ENCODE measurements at regions of chr3 and their contacts with region 1.

Region 1: DNA sequence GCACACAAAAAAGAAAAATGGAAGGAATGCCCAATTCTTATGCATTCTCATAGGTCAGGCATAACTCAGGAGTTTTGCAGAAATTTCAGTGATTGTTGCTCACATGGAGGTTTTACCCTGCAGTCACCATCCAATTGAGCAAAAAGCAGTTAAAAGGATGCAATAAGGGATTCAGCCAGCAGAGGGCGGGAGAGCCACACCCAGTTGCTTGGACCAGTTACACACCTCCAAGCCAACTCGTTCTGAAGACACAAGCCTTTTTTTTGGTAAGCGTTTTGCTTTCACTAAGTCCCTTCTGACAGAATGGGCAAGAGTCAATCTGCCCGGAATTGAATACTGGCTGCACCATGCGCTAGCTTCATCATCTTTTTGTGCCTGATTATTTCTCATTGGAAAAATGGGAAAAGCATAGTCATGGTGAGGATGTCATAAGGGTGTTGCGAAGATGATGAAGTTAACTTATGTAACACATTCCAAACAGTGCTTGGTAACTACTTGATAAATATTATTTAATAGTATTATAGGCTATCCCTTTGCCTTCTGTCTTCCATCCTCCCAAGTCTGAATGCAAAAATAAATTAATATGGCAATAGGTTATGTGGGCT is 154.4 kb upstream of the SGO1 start:
- DNase-seq: peak; percentile 19 to 81
- ATAC-seq: peak; percentile 73 to 93 (median 78)
- H3K4me3 ChIP-seq: peak overlapping the region in 1 of 10 donors; percentile 5
- H3K27ac ChIP-seq: no peak overlapping the region
- H3K4me1 ChIP-seq: peaks cover 0 to 4% (median 0%) of the 10 kb centered on the region in 9 donors
- H3K27me3 ChIP-seq: no peaks in the 10 kb centered on the region
- CTCF ChIP-seq: peak; percentile 87 to 97 (median 94)

Region 2: DNA sequence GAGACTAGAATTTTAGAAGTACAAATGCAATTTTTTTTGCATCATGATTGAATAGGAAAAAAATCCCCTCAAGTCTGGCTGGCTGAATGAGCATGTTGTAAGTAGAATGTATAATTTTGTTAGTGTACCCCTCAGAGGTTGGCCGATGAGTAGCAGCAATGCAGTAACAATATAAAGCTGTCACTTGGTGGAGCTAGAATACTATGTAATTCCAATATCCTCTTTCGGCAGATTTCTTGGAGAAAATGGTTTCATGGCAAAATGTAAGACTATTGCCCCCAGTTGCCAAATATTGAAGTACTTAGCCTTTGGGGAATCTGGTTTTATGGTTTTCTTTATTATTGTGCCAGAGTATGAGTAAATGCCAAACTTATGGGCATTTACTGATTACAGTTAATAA is 114.7 kb before region 1 on chr3:
- intact Hi-C with region 1: loop called in 1 of 10 experiments (anchors 5 kb)
- DNase-seq: no peak
- ATAC-seq: peak in 3 of 8 donors; percentile 42 to 55 (median 44)
- H3K4me3 ChIP-seq: no peak overlapping the region
- H3K27ac ChIP-seq: no peak overlapping the region
- H3K4me1 ChIP-seq: peaks cover 0 to 6% (median 0%) of the 10 kb centered on the region in 9 donors
- H3K27me3 ChIP-seq: no peaks in the 10 kb centered on the region
- CTCF ChIP-seq: peak; percentile 11 to 74 (median 64)

Region 3: GRCh38 chr3:20739814-20740213 is 399.4 kb after region 1 on chr3:
- intact Hi-C with region 1: loop called in 3 of 10 experiments (anchors 2 to 5 kb)
- DNase-seq: no peak
- ATAC-seq: peak in 1 of 8 donors; percentile 69
- H3K4me3 ChIP-seq: no peak overlapping the region
- H3K27ac ChIP-seq: no peak overlapping the region
- H3K4me1 ChIP-seq: peaks cover 0 to 4% (median 0%) of the 10 kb centered on the region in 9 donors
- H3K27me3 ChIP-seq: no peaks in the 10 kb centered on the region
- CTCF ChIP-seq: peak in 6 of 9 donors; percentile 14 to 52 (median 32)

Region 4: DNA sequence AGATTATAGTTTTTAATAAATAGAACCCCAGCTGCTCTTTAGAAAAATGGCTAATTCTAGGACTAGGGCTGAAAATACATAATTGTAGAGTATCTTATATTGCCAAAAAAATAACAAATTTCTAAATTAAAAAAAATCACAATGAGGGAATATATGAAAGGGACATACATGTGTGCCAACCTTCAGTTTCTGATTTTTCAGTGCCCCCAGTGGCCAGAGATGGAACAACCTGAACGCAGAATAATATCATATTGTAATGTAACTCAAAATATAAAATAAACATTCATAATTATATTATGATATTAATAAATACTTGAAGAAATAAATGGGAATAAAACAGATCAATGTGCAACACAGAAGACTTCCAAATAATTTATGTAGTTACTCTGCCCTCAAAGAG is 950.1 kb after region 1 on chr3:
- intact Hi-C with region 1: loop called in 1 of 10 experiments (anchors 10 kb)
- DNase-seq: no peak
- ATAC-seq: no peak
- H3K4me3 ChIP-seq: no peak overlapping the region
- H3K27ac ChIP-seq: no peak overlapping the region
- H3K4me1 ChIP-seq: no peaks in the 10 kb centered on the region
- H3K27me3 ChIP-seq: no peaks in the 10 kb centered on the region
- CTCF ChIP-seq: peak; percentile 22 to 69 (median 51)

Region 5: DNA sequence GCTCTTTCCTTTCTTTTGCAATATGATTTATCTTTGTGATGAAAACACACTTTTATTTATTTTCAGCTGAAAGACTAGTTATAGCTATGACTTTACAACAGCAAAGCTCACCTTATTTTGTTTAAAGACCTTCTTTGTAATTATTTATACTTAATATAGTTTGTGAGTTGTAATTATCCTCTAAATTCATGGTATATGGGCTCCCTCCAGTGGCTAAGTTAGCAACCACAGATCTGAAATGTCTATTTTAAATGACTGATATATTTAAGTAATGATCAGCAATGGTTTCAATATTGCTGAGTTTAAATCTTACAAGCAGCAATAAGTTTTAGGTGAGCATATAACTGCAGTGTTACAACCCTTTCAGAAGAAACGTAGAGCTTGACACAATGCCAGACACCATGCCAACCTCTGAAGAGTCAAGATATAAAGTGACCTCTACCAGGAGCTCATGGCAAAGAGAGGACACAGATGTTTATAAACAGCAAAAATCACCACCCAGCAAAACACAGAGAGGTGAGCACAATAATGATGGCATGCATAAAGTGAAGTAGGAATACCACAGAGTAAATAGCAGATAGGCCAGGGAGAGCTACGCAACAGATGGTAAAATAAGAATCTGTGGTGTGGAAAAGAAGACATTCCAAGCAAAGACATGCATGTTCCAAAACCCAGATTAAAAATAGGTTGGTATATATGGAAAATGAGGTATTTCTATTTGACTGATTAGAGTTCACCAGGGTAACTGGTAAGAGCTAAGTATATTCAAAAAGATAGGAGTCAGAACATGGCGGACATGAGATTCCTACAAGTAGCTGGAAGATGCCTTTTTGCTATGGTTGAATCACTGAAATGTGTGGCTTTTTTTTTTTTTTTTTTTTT is 1554.3 kb after region 1 on chr3:
- intact Hi-C with region 1: loop called in 3 of 10 experiments (anchors 5 to 10 kb)
- DNase-seq: peak in 1 of 2 donors; percentile 19
- ATAC-seq: peak in 7 of 8 donors; percentile 50 to 82 (median 71)
- H3K4me3 ChIP-seq: no peak overlapping the region
- H3K27ac ChIP-seq: peak overlapping the region in 4 of 10 donors; percentile 5 to 44 (median 33)
- H3K4me1 ChIP-seq: peaks cover 0 to 51% (median 0%) of the 10 kb centered on the region in 9 donors
- H3K27me3 ChIP-seq: no peaks in the 10 kb centered on the region
- CTCF ChIP-seq: peak; percentile 41 to 84 (median 70)